Mammary epithelial cell (primary cell): ENCODE measurements at regions of chr3 and their contacts with region 1.

Region 1: DNA sequence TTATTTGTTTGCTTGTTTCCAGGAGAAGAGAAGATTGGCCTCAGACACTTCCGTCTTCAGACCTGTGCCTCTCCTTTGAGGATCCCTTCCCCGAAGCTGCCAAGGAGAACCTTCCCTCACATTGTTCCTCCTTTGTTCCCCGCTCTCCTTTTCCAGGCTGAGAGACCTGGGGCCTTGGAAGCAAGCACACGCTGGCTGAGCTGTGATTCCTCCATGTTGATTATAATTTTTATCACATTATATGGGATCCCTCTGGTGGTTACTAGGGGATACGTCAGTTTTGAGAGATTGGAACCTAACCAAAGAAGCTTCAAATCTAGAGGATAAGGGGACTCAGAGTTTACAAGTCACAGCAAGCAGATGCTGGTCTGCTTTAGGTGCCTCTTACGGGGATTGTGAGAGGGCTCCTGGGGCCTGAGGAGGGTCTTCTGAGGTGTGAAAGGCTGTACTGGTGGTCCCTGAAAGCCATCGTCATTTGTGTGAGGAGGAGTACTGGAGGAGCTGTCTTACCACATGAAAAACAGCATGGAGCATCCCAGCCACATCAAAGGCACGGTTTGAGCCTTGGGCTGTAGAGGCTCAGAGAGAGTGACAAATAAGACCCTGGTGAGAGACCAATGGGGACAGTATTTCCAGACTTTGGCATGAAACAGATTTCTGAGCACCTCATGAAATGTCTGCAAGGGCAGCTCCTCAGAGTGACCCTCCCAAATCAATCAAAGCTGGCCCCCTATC is 760.1 kb upstream of the CFAP20DC start:
- DNase-seq: peak; percentile 34
- H3K4me3 ChIP-seq: no peak overlapping the region
- H3K27ac ChIP-seq: no peak overlapping the region
- H3K4me1 ChIP-seq: no peaks in the 10 kb centered on the region
- H3K27me3 ChIP-seq: no peaks in the 10 kb centered on the region
- CTCF ChIP-seq: peak; percentile 33 to 69

Region 2: DNA sequence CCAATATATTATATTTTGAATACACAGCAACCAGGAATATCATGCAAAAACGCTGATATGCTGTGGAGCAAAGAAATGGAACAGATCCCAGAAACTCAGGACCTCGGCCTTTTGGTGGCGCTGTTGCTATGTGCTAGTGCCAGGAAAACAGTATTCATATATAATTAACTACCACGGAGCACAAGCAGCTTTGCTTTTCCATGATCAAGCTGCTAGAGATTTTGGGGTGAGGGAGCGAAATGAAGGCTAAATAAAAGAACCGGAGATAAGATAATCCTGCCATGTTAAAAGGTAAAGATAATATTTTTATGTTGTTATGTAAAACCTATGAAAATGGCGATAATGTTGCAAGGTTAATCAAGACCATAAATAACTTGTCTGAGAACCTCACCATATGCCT is 985.6 kb before region 1 on chr3:
- CTCF ChIA-PET with region 1: no interaction called
- dilution Hi-C with region 1: no loop called
- in situ Hi-C with region 1: no loop called
- intact Hi-C with region 1: loop called (anchors 10 kb)
- DNase-seq: peak; percentile 64
- H3K4me3 ChIP-seq: no peak overlapping the region
- H3K27ac ChIP-seq: no peak overlapping the region
- H3K4me1 ChIP-seq: peaks cover 5% of the 10 kb centered on the region
- H3K27me3 ChIP-seq: no peaks in the 10 kb centered on the region
- CTCF ChIP-seq: peak; percentile 85 to 86

Region 3: DNA sequence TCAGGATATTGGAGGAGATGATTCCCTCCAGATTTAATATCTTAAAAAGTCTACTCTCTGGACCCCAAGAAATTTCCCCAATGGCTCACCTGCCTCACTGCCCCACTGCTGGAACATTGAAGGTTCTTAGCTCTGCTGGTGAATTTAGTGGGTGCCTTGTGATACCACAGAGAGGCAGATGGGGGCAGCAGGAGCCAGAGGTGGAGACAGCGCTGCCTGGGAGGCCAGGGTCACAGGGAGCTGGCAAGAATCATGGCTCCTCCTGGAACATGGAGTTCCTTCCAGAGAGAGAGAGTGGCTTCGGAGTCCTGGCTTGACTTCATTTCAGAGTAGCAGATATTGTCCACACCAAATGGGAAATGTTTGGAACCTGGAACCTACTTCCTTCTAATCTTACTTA is 496.5 kb before region 1 on chr3:
- CTCF ChIA-PET with region 1: interaction called, 10 read pairs
- dilution Hi-C with region 1: no loop called
- in situ Hi-C with region 1: no loop called
- intact Hi-C with region 1: loop called (anchors 1 kb)
- DNase-seq: peak; percentile 26
- H3K4me3 ChIP-seq: no peak overlapping the region
- H3K27ac ChIP-seq: no peak overlapping the region
- H3K4me1 ChIP-seq: peaks cover 15% of the 10 kb centered on the region
- H3K27me3 ChIP-seq: no peaks in the 10 kb centered on the region
- CTCF ChIP-seq: peak; percentile 59 to 78

Region 4: GRCh38 chr3:59486520-59486919 is 323.4 kb before region 1 on chr3:
- CTCF ChIA-PET with region 1: no interaction called
- dilution Hi-C with region 1: no loop called
- in situ Hi-C with region 1: no loop called
- intact Hi-C with region 1: no loop called
- DNase-seq: no peak
- H3K4me3 ChIP-seq: no peak overlapping the region
- H3K27ac ChIP-seq: no peak overlapping the region
- H3K4me1 ChIP-seq: peaks cover 13% of the 10 kb centered on the region
- H3K27me3 ChIP-seq: no peaks in the 10 kb centered on the region
- CTCF ChIP-seq: no peak

Region 5: DNA sequence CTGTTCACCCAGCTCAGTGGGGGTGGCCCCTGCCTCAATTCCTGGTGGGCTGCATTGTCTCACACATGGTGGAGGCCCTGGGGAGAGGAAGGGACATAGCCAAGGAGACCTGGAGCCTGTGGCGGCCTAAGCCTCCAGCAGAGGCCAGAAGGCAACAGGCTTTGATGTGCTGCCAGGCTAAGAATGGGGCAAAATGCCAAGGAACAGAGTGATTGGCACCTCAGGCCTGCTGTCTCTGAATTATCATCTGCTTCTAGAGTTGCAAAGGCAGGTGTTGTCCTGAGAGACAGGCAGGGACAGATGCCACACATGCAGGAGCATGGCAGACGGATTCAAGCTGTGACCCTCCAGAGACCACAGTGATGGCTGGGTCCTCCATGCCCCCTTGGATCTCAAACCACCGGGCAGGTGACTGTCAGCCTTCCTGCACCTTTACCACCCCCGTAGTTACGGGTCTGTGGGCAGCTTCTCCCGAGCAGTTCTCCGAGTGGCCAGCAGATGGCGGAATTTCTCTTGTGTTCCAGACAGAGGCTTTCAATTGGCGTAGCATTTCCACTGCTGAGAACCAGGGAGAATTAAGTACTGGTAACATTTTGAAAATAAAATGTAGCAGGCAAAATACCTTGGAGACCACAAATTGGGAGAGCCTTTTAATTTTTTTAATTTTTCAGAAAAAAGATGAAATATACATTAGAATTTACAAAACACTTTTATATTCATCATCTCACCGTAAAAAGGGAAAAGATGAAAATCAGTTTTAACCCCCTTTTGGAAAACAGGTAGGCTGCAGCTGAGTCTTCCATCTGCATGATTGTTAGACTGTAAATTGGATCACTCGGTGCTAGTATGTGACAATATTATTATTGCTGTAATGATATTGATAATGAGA is 234.5 kb before region 1 on chr3:
- CTCF ChIA-PET with region 1: interaction called, 5 read pairs
- dilution Hi-C with region 1: no loop called
- in situ Hi-C with region 1: loop called (anchors 10 kb)
- intact Hi-C with region 1: loop called (anchors 1 kb)
- DNase-seq: peak; percentile 70
- H3K4me3 ChIP-seq: no peak overlapping the region
- H3K27ac ChIP-seq: no peak overlapping the region
- H3K4me1 ChIP-seq: peaks cover 30% of the 10 kb centered on the region
- H3K27me3 ChIP-seq: no peaks in the 10 kb centered on the region
- CTCF ChIP-seq: peak; percentile 95 to 97

Region 6: DNA sequence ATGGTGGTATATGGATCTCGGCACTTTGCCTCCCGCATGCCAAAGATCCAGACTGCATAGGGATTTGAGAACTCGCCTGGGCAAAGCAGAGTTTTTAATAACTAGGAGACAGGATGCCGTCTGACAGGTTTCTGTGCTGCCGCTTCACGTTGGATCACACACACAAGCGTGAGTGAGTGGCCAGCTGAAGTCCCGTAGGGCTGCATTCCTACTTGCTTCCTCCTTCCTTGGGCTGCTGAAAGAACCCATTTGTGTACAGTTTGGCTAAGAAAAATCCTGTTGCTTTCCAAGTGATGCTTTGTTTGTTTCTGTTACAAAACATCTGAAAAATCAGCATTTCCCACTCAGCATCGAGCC is 155.8 kb before region 1 on chr3:
- CTCF ChIA-PET with region 1: interaction called, 3 read pairs
- dilution Hi-C with region 1: no loop called
- in situ Hi-C with region 1: no loop called
- intact Hi-C with region 1: loop called (anchors 10 kb)
- DNase-seq: peak; percentile 78
- H3K4me3 ChIP-seq: peak overlapping the region in 1 of 3 experiments; percentile 28
- H3K27ac ChIP-seq: peak overlapping the region; percentile 75
- H3K4me1 ChIP-seq: peaks cover 24% of the 10 kb centered on the region
- H3K27me3 ChIP-seq: no peaks in the 10 kb centered on the region
- CTCF ChIP-seq: no peak

Region 7: DNA sequence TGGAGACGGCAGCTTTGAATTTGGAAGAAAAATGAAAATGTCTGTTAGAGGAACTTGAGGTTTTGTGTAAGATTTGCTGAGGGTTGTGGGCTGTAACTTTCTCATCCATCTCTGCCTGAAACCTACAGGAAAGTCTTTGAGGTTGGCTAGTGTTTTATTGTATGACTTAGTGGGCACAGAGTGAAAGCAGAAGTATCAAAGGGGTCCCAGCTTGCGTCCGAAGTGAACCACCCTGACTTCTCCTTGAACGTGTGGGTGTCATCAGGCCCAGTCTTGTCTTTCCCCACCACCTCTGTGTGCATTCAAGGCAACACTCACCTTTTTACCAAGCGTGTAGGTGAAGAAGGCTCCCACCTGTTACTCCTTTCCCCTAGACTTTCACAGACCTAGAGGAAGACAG is 77.9 kb before region 1 on chr3:
- CTCF ChIA-PET with region 1: no interaction called
- dilution Hi-C with region 1: no loop called
- in situ Hi-C with region 1: no loop called
- intact Hi-C with region 1: no loop called
- DNase-seq: no peak
- H3K4me3 ChIP-seq: no peak overlapping the region
- H3K27ac ChIP-seq: no peak overlapping the region
- H3K4me1 ChIP-seq: no peaks in the 10 kb centered on the region
- H3K27me3 ChIP-seq: no peaks in the 10 kb centered on the region
- CTCF ChIP-seq: no peak